Posterior cingulate gyrus (tissue), 11 donors: ENCODE measurements at regions of chr14 and their contacts with region 1.

Region 1: DNA sequence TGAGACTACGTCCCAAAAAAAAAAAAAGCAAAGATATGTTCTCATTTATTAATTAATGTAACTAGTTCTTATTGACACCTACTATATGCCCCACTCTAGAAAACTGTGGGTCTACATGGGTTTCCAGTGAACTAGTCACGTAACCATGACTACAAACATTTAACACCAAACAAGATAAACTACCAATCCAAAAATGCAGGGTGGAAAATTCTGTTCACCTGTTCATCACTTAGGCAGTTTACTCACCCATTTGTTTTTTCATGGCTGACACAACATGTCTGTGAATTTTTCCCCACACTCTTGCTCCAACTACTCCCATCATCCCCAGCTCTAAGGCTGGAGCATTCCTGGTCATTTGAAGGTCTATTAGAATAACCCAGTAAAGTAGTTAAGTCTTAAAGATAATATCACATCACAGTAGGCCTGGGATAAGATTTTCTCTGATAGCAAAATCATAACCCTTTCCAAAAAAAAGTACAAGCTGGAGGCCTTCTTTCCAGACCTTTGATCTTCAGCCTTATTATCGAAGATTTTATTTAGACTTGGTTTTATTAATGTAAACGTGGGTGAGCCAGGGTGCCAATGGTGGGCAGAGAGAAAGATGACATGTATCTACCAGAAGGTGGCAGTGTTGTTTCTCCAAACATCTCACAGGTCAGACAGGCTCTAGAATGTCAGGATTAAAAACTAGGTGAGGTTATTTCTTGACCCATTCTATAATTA is 61.6 kb upstream of the DAAM1 start:
- DNase-seq: peak in 1 of 10 donors; percentile 9

Region 2: DNA sequence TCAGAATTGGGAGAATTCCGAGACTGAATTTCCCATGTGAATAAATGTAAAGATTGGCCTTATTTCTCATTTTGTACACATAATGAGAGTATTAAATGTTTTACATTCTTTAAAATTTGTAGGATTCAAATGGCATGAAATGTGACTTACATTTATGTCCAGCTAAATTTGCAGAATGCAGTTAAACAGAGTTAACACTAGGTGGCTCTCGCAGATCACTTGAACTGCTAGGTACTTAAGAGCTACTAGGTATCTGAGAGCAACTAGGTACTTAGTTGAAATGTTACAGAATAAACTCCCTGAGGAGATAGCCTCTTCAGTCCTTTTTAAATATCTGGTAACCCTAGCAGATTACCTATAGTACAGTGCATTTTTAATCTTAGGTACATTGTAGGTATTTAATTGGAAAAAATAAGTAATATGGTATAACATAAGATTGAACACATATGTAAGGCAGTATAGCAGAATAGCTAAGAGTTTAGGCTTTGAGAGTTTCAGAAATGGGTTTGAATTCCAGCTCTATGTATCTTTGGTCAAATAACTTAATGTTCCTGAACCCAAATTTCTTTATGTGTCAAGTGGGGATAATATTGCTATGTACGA is 625.6 kb before region 1 on chr14:
- intact Hi-C with region 1: loop called (anchors 5 kb)
- DNase-seq: peak in 1 of 10 donors; percentile 28

Region 3: DNA sequence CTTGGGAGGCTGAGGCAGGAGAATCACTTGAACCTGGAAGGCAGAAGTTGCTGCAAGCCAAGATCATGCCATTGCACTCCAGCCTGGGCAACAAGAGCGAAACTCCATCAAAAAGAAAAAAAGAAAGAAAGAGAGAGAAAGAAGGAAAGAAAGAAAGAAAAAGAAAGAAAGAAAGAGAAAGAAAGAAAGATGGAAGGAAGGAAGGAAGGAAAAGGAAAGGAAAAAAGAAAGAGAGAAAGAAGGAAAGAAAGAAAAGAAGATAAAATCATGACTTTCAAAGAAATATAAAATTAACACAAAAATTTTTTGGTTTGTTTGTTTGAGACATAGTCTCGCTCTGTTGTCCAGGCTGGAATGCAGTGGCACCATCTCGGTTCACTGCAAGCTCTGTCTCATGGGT is 39.4 kb after region 1 on chr14:
- intact Hi-C with region 1: no loop called
- DNase-seq: no peak

Region 4: GRCh38 chr14:59199205-59199604 is 72.3 kb after region 1 on chr14:
- intact Hi-C with region 1: no loop called
- DNase-seq: no peak

Region 5: GRCh38 chr14:59330455-59330854 is 203.6 kb after region 1 on chr14:
- intact Hi-C with region 1: no loop called
- DNase-seq: no peak

Region 6: DNA sequence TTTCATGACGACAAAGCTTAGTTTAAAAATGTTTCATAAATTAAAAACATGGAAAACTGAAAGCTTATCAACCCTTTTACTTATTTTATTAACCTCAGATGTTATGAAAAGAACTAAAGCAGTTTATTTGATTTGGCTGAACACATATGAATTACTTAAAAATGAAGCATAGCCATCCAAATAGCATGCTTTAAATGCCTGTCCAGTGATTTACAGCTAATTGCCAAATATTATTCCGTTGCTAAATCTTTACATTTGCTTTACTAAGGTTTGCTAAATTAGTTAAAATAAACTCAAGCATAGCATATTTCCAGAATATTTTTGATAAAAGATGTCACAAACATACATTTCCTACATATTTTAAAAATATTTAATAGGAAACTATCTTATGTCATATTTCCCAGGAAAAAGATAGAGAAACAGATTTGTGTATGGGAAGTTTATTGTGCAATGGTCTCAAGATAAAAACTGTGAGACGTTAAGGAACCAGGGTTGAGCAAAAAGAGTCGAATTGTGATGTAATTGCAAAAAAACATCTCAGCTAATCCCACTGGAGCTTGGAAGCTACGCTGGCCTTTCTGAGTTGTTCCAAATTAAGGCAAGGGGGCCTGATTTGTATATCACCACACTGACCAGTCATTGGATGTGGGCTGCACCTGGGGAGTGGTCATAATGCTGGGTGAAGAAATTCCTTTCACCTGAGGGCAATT is 312.5 kb after region 1 on chr14:
- intact Hi-C with region 1: loop called (anchors 1 kb)
- DNase-seq: no peak

Region 7: DNA sequence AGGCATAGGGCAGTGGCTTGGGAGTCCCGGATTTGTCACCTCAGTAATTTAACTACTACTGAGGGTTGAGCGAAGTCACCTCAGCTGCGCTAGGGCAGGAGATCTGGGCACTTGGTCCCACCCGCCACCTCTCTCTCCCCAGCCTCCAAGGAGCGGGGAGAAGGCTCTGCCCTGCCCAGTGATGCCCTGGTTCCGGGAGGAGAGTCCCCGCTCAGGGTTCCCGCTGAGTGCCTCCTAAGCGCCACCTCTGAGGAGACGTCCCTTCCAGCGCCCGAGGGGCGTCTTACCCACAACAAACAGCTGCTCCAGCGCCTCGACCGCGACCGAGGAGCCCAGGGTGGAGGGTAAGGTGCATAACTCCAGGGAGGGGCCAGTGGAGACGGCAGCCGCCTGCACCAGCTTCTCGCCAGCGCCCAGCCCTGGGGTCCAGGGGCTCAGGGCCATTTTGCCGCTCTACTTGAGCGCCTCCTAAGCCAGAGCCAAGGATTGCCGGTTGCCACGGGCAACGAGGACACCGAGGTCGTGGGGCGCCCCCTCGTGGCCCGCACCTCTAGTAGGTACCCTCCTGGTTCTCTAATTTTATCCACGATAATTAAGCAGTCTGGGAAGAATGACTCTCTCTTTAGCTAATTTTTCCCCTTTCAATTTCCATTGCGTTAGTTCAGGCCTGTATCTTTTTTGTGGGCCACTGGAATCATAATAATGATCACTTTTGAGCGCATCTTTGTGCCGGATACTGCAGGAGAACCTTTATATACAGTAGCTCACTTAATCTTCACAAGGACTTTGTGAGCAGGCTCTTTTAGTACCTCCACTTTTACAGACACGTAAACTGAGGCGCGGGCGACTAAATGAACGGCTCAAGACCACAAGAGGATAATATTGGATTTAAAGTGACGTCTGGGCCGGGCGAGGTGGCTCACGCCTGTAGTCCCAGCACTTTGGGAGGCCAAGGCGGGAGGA is 449.7 kb after region 1 on chr14 and contains the start of gene CCDC175:
- intact Hi-C with region 1: loop called (anchors 5 kb)
- DNase-seq: peak; percentile 59 to 97 (median 83)